ENCODE measurements at regions of chr2 and their contacts with region 1.

Region 1: DNA sequence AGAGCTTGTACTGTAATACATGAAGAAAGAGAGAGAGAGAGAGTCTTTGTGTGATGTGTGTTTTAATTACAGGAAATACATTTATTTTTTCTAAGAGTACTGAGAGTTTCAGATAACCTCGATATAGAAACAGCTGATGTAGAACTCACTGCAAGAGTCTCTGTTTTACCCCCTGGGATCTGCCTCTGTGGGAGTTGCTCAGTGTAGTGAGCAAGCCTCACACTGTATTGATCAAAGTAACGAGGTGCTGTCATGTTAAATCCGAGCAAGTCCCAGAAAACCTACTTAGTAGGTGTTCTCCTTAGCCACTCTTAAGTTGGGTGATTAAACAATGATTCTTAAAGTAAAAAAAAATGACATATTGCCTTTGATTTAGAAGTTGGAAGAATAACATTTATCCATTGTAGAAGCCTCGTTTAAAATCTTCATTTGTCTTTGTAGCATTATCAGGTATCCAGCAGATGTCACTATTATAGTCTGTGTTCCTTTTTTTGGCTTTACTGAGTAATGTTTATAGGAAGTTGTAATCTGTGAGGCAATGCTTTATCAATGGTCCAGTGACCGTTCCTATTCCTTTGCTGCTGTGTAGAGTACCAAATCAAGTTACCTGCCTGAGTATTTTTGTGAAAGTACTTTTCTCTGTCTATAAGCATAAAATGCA is 219.0 kb downstream of the MYO3B start:
- DNase-seq: peak in 1 of 2 experiments; percentile 19
- ATAC-seq: peak; percentile 66 to 71; a peak in 5 of 6 replicates
- H3K4me3 ChIP-seq: no peak overlapping the region
- H3K27ac ChIP-seq: no peak overlapping the region
- H3K4me1 ChIP-seq: no peaks in the 10 kb centered on the region
- CTCF ChIP-seq: peak; percentile 53
- EP300 ChIP-seq: no peak
- POLR2A ChIP-seq: no peak
- RAD21 ChIP-seq: peak; percentile 44 to 53; a peak in 3 of 5 replicates

Region 2: DNA sequence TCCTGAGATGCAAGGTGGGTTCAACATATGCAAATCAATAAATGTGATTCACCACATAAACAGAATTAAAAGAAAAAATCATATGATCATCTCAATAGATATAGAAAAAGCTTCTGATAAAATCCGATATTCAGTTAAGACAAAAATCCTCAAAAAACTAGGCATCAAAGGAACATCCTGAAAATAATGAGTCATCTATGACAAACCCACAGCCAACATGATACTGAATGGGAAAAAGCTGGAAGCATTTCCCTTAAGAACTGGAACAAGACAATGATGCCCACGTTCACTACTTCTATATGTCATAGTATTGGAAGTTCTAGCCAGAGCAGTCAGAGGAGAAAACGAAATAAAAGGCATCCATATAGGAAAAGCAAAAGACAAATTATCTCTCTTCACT is 138.5 kb before region 1 on chr2:
- CTCF ChIA-PET with region 1: no interaction called
- POLR2A ChIA-PET with region 1: no interaction called
- DNase-seq: no peak
- ATAC-seq: no peak
- H3K4me3 ChIP-seq: no peak overlapping the region
- H3K27ac ChIP-seq: no peak overlapping the region
- H3K4me1 ChIP-seq: no peaks in the 10 kb centered on the region
- CTCF ChIP-seq: no peak
- EP300 ChIP-seq: no peak
- POLR2A ChIP-seq: no peak
- RAD21 ChIP-seq: no peak

Region 3: GRCh38 chr2:170377500-170378207 is 19.3 kb before region 1 on chr2:
- CTCF ChIA-PET with region 1: interaction called, 10 read pairs
- POLR2A ChIA-PET with region 1: no interaction called
- DNase-seq: no peak
- ATAC-seq: no peak
- H3K4me3 ChIP-seq: no peak overlapping the region
- H3K27ac ChIP-seq: no peak overlapping the region
- H3K4me1 ChIP-seq: no peaks in the 10 kb centered on the region
- CTCF ChIP-seq: peak; percentile 19; the same call in 2 of the 3 replicates
- EP300 ChIP-seq: no peak
- POLR2A ChIP-seq: no peak
- RAD21 ChIP-seq: 0 out of 5 replicates have a peak, but pooled peaks of 1 of the 2 experiments have one; percentile 8

Region 4: DNA sequence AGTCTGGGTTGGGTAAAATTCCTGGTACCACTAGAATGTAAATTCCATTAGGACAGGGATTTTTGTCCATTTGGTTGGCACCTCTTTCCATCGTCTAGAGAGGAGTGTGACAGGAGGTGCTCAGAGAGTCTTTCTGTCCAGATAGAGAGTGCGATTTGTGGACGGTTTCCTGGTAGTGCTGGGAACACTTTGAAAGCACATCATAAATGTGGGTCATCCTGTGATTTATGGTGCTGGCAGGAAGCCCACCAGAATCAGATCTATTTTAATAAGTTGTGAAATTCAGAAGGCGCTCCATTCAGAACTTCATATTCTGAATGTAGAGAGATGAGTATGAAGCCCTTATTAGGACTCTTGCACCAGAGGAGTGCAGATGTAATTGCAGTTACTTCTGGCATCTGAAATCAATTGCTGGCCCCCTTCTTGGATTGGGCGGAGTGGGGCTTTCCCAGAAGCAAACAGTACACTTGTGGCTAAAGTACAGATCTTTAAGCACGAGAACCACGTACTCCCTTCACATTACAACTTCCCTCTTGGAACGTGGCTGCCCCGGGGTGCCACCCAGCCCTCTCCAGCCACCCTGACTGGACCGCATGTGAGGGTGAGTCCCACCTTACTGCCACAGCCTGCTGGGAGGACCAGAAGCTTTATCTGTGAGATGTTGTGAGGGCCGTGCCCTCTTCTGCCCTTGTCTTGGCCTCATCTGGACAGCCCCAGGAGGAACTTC is 24.2 kb after region 1 on chr2:
- CTCF ChIA-PET with region 1: no interaction called
- POLR2A ChIA-PET with region 1: no interaction called
- DNase-seq: no peak
- ATAC-seq: no peak
- H3K4me3 ChIP-seq: no peak overlapping the region
- H3K27ac ChIP-seq: no peak overlapping the region
- H3K4me1 ChIP-seq: no peaks in the 10 kb centered on the region
- CTCF ChIP-seq: no peak
- EP300 ChIP-seq: no peak
- POLR2A ChIP-seq: no peak
- RAD21 ChIP-seq: no peak

Measured in A549 (cell line).